ENCODE measurements at regions of chr18 and their contacts with region 1.

Region 1: GRCh38 chr18:63339920-63340484 is 20.4 kb upstream of the BCL2 start:
- DNase-seq: no peak
- H3K4me3 ChIP-seq: no peak overlapping the region
- H3K27ac ChIP-seq: no peak overlapping the region
- H3K27me3 ChIP-seq: no peaks in the 10 kb centered on the region
- CTCF ChIP-seq: peak; percentile 55

Region 2: GRCh38 chr18:61972389-61973264 is 1367.4 kb before region 1 on chr18:
- CTCF ChIA-PET with region 1: no interaction called
- POLR2A ChIA-PET with region 1: no interaction called
- DNase-seq: no peak
- H3K4me3 ChIP-seq: no peak overlapping the region
- H3K27ac ChIP-seq: no peak overlapping the region
- H3K27me3 ChIP-seq: no peaks in the 10 kb centered on the region
- CTCF ChIP-seq: no peak

Region 3: DNA sequence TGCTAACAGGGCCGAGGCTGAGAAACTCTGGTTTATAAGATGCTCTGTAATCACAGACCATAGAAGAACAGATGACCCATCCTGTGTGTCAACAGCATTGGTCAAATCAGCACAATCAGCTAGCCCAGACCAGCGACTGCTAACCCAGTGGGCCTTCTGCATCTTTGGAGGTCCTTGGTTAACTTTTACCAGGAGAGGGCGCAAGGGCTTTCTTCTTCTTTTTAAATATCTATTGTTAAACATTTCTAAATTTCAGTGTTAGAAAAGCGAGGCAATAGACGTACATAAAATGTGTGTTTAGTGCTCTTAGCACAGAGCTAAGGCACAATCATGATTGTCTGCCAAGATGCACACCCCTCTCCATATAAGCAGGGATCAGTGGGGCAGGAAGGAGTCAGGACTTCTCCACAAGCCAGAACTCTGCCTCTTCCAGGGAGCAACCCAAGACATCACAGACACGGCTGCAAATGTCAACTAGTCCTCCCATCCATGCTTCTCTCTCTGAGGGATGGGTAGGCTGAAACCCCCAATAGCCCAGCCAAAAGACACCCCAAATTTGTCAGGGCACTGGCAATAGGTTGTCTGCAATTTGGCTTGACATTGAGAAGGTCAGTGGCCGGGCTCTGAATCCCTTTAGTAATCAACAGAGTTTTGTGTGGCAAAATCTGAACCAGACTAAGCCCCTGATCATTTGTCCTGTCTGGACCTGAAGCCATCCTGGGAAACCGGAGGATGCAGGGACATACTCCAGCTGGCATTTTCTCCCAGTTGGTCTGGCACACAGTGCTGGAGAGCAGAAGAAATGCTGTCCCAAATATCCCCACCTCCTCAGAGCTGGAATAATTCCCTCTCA is 208.7 kb before region 1 on chr18:
- CTCF ChIA-PET with region 1: interaction called, 26 read pairs
- POLR2A ChIA-PET with region 1: no interaction called
- DNase-seq: peak; percentile 16
- H3K4me3 ChIP-seq: no peak overlapping the region
- H3K27ac ChIP-seq: no peak overlapping the region
- H3K27me3 ChIP-seq: peaks cover 14% of the 10 kb centered on the region
- CTCF ChIP-seq: peak; percentile 74

Region 4: DNA sequence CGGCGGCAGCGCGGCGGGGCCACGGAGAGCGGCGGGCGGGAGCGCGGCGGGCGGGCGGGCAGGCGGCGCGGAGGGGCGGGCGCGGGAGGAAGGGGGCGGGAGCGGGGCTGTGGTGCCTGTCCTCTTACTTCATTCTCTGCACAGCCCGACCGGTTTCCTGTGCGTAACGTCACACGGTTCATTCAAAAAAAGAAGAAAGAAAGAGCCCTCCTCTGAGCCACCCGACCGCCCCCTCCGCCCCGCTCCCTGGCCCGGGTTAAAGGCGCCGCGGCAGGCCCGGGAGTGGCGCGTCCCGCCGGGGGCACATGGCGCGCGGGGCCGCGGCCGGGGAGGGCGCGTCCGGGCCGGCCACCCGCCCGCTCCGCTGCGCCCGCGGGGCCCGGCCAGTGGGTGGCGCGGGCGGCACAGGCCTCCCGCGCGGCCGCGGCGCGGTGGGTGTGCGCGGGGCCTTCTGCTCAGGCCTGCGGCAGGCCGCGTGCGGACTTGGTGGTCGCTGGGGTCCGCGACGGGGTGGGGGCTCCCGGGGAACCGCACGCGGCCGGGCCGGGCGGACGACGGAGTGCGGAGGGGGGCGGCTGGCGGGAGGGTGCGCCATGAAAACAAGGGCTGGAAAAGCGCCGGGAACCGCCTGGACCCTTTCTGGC is 19.8 kb before region 1 on chr18:
- CTCF ChIA-PET with region 1: interaction called, 37 read pairs
- POLR2A ChIA-PET with region 1: no interaction called
- DNase-seq: peak; percentile 41
- H3K4me3 ChIP-seq: peak overlapping the region; percentile 70
- H3K27ac ChIP-seq: no peak overlapping the region
- H3K27me3 ChIP-seq: peaks cover 19% of the 10 kb centered on the region
- CTCF ChIP-seq: no peak

Region 5: DNA sequence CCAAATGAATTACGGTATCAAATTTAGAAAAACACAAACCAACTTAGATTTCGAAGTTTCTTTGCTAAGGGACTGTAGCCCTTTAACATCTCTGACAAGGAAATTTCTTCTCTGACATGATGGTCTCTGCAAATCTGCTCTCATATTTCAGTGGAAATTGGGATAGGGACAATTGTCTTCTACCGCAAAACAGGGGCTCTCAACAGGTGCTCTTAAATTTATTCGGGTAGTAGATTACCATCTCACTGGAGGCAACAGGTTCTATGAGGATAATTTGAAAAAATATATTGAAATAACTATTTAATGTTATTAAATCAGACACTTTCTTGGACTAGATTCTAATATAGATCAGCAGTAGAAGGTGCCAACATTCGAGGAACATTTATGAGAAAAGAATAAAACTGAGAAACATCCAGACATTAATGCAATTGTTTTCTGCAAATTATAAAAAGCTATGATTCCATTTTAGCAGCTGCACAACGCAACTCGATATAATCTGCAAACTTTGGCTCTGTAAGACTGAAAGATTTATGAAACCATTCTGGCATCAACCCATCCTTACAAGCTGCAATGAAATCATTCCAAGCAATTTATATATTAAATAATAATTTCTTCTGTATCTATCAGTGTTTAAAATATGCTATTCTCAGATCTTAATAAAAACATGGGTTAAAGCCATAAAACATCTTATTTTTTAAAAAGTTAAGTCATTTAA is 10.4 kb before region 1 on chr18:
- CTCF ChIA-PET with region 1: interaction called, 37 read pairs
- POLR2A ChIA-PET with region 1: no interaction called
- DNase-seq: no peak
- H3K4me3 ChIP-seq: no peak overlapping the region
- H3K27ac ChIP-seq: no peak overlapping the region
- H3K27me3 ChIP-seq: no peaks in the 10 kb centered on the region
- CTCF ChIP-seq: no peak

Region 6: DNA sequence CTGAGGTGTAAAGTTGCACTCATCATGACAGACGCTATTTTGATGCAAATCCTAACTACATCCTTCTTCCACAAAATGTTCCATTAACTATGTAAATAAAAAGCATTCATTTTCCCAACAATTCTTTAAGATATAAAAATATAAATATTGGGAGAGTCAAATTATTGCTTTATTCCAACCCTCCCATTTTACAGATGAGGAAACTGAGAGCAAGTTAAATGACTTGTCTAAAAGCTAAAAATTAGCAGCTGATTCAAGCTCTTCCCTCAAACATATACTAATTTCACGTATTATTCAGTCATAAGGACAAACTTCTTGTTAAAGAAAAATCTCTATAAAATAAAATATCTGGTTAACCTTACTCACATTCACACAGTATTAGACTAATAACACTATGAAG is 10.2 kb after region 1 on chr18:
- CTCF ChIA-PET with region 1: interaction called, 33 read pairs
- POLR2A ChIA-PET with region 1: no interaction called
- DNase-seq: no peak
- H3K4me3 ChIP-seq: no peak overlapping the region
- H3K27ac ChIP-seq: no peak overlapping the region
- H3K27me3 ChIP-seq: no peaks in the 10 kb centered on the region
- CTCF ChIP-seq: no peak

Region 7: GRCh38 chr18:63367053-63367953 is 27.3 kb after region 1 on chr18 and contains the start of gene KDSR:
- CTCF ChIA-PET with region 1: interaction called, 18 read pairs
- POLR2A ChIA-PET with region 1: interaction called, 6 read pairs
- DNase-seq: peak; percentile 97
- H3K4me3 ChIP-seq: peak within 1 kb of the TSS; percentile 90
- H3K27ac ChIP-seq: peak within 1 kb of the TSS; percentile 96
- H3K27me3 ChIP-seq: no peaks in the 10 kb centered on the region
- CTCF ChIP-seq: no peak
- polyA plus RNA-seq, gene KDSR: 34.0 and 39.9 TPM in 2 replicates

Region 8: DNA sequence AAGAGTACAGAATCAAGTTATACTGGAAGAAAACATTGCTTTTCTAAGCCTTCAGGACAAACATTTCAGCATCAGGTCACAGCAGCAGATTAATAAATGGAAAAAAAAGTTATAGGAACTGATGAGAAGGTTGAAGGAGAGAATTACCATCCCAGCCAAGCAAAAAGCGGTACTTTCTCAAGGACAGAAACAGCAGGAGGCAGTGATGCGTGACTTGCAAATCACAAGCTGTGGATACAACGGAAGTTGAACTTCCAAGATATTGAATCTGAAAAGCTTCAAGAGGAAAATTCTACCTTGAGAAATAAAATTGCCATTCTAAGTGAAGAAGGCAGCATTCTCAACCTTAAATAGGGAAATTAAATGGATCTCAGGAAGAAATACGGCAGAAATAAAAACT is 183.7 kb after region 1 on chr18:
- CTCF ChIA-PET with region 1: no interaction called
- POLR2A ChIA-PET with region 1: no interaction called
- DNase-seq: no peak
- H3K4me3 ChIP-seq: no peak overlapping the region
- H3K27ac ChIP-seq: no peak overlapping the region
- H3K27me3 ChIP-seq: peaks cover 3% of the 10 kb centered on the region
- CTCF ChIP-seq: no peak

Measured in AG04450 (cell line).